Kidney (tissue), 22 donors: ENCODE measurements at regions of chr2 and their contacts with region 1.

Region 1: GRCh38 chr2:11234309-11234708 is 79.0 kb downstream of the SLC66A3 start:
- DNase-seq: peak in 2 of 5 donors; percentile 23 to 32
- H3K4me3 ChIP-seq: no peak overlapping the region
- H3K27ac ChIP-seq: no peak overlapping the region
- H3K4me1 ChIP-seq: no peaks in the 10 kb centered on the region
- H3K27me3 ChIP-seq: no peaks in the 10 kb centered on the region
- CTCF ChIP-seq: peak; percentile 22

Region 2: GRCh38 chr2:11411768-11412448 is 177.6 kb after region 1 on chr2:
- intact Hi-C with region 1: loop called (anchors 10 kb)
- DNase-seq: peak in 3 of 5 donors; percentile 54 to 78 (median 68)
- H3K4me3 ChIP-seq: peak overlapping the region in 2 of 3 donors; percentile 50 to 65
- H3K27ac ChIP-seq: no peak overlapping the region
- H3K4me1 ChIP-seq: peaks cover 0 to 8% (median 5%) of the 10 kb centered on the region in 3 donors
- H3K27me3 ChIP-seq: no peaks in the 10 kb centered on the region
- CTCF ChIP-seq: peak; percentile 89